ENCODE measurements at regions of chr3 and their contacts with region 1.

Region 1: DNA sequence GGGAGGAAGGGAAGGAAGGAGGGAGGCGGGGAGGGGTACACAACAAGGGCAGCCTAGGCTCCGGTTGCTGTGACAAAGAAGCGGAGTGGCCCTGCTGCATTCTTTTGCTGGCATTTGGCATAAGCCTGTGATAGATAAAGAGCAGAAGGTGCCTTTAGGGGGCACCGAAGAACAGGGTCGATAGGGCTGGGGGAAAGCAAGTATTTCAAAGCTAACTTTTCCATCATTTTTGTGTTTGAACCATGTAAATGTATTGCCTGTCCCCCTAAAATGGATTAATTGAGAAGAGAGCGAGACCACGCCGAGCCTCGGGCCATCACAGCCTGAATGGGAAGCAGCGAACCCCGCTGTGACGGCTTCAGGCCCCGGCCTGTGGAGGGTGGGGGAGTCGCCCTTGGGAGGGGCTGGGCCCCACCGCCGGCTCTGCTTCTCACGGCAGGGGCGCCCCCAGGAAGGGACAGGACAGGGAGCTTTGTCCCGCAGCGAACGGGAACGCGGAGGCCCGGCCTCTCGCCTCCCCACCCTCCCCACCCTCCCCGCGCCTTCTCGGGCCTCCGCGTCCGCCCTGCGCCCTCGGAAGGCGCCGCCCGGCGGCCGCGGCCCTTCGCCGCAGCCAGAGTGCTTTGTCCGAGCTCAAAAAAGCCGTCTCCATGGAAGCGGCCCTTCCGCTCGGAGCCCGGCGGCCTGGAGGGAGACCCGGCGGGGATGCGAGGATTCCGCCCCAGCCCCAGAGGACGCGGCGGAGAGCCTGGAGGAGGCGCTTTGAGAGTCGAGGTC is 32.4 kb upstream of the ALDH1L1 start:
- ATAC-seq: peak; percentile 80 to 94 (median 90)
- H3K4me3 ChIP-seq: peak overlapping the region; percentile 22 to 35 (median 31)
- H3K27ac ChIP-seq: no peak overlapping the region
- H3K4me1 ChIP-seq: peaks cover 2 to 6% of the 10 kb centered on the region in 2 donors

Region 2: GRCh38 chr3:125957674-125958510 is 254.9 kb before region 1 on chr3:
- in situ Hi-C with region 1: loop called in 1 of 9 experiments (anchors 25 kb)
- ATAC-seq: peak in 5 of 8 experiments; percentile 24 to 67 (median 54)
- H3K4me3 ChIP-seq: peak overlapping the region in 2 of 5 donors; percentile 5 to 17
- H3K27ac ChIP-seq: no peak overlapping the region
- H3K4me1 ChIP-seq: no peaks in the 10 kb centered on the region